MCF 10A (cell line): ENCODE measurements at regions of chr11 and their contacts with region 1.

Region 1: GRCh38 chr11:47152953-47153950 is 23.4 kb downstream of the ARFGAP2 start:
- DNase-seq: peak; percentile 80
- H3K4me3 Mint-ChIP-seq: no peak overlapping the region
- H3K27ac Mint-ChIP-seq: no peak overlapping the region
- H3K4me1 Mint-ChIP-seq: peaks cover 6% of the 10 kb centered on the region
- H3K27me3 Mint-ChIP-seq: no peaks in the 10 kb centered on the region
- CTCF ChIP-seq: peak; percentile 96

Region 2: DNA sequence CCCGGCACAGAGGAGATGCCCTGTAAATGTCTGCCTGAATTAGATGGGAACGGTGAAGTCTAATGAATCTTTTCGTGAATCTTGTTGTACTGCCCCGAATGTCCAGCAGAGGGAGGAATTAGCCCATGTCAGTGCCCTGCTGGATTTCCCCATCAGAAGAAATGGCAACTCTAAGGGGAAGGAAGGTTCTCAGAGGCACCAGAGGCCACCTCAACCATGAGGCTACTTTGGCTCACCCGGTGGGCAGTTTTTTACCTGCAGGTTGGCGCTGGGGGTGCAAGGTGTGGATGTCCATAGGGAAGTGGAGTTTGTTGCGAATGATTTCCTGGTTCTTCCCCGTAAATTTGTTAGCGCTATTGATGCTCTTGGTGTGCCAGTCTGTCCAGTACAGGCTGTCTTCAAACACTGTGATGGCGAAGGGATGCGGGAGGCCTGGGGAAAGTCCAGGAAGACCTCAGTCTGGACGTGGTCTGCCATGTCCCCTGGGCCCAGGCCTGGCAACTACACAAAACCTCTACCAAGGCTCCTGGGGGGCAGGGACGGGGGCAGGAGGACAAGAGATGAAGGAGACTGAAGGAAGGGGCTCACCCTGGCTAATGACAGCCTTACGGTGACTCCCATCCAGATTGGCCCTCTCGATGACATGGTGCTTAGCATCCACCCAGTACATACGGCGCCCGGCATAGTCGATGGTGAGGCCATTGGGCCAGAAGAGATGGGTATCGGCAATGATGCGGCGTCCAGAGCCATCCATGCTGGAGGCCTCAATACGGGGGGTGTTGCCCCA is 263.4 kb before region 1 on chr11:
- CTCF ChIA-PET with region 1: interaction called, 99 read pairs
- POLR2A ChIA-PET with region 1: interaction called, 3 read pairs
- intact Hi-C with region 1: loop called (anchors 1 kb)
- DNase-seq: peak; percentile 82
- H3K4me3 Mint-ChIP-seq: no peak overlapping the region
- H3K27ac Mint-ChIP-seq: no peak overlapping the region
- H3K4me1 Mint-ChIP-seq: no peaks in the 10 kb centered on the region
- H3K27me3 Mint-ChIP-seq: no peaks in the 10 kb centered on the region
- CTCF ChIP-seq: peak; percentile 72

Region 3: GRCh38 chr11:46906609-46907041 is 246.6 kb before region 1 on chr11:
- CTCF ChIA-PET with region 1: interaction called, 12 read pairs
- POLR2A ChIA-PET with region 1: no interaction called
- intact Hi-C with region 1: no loop called
- DNase-seq: no peak
- H3K4me3 Mint-ChIP-seq: no peak overlapping the region
- H3K27ac Mint-ChIP-seq: no peak overlapping the region
- H3K4me1 Mint-ChIP-seq: no peaks in the 10 kb centered on the region
- H3K27me3 Mint-ChIP-seq: peaks cover 7% of the 10 kb centered on the region
- CTCF ChIP-seq: no peak

Region 4: GRCh38 chr11:47130543-47130942 is 22.7 kb before region 1 on chr11:
- CTCF ChIA-PET with region 1: interaction called, 12 read pairs
- POLR2A ChIA-PET with region 1: no interaction called
- intact Hi-C with region 1: no loop called
- DNase-seq: no peak
- H3K4me3 Mint-ChIP-seq: no peak overlapping the region
- H3K27ac Mint-ChIP-seq: no peak overlapping the region
- H3K4me1 Mint-ChIP-seq: no peaks in the 10 kb centered on the region
- H3K27me3 Mint-ChIP-seq: no peaks in the 10 kb centered on the region
- CTCF ChIP-seq: no peak

Region 5: GRCh38 chr11:47317064-47317828 is 164.0 kb after region 1 on chr11:
- CTCF ChIA-PET with region 1: no interaction called
- POLR2A ChIA-PET with region 1: no interaction called
- intact Hi-C with region 1: no loop called
- DNase-seq: no peak
- H3K4me3 Mint-ChIP-seq: no peak overlapping the region
- H3K27ac Mint-ChIP-seq: no peak overlapping the region
- H3K4me1 Mint-ChIP-seq: no peaks in the 10 kb centered on the region
- H3K27me3 Mint-ChIP-seq: no peaks in the 10 kb centered on the region
- CTCF ChIP-seq: no peak

Region 6: DNA sequence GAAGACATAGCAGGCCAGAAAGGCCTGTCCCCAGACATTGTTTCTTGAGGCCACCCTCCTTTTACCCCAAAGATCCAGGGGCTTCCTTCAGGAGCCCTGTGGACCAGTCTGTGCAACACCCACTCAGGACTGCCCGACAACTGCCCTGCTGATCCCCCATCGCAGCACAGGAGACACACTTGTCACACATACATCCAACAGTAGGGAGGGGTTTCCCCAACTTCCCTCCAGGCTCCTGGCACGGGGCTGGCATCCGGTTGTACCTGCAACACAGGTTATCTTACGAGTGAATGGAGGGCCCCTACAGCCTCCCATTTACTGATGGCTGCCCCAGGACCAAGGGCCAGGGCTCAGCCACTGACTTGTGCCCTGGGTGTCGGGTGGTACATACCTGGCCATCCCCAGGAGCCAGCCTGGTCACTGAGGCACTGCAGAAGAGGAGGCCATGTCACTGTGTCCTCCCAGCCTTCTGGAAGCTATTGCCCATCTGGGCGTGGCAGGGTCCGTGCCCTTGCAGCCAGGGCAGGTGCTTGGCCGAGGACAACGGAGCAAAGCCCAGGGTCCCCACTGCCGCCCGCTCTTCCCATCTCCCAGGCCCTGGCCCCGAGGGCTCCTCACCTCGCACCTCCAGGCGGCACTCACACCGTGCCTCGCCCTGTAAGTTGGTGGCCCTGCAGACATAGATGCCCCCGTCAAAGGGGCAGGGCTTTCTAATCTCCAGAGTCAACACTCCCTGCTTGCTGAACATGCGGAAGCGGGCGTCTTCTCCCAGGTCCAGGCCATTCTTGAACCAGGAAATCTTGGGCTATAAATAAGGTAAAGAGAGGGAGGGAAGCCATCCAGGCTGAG is 178.4 kb after region 1 on chr11:
- CTCF ChIA-PET with region 1: no interaction called
- POLR2A ChIA-PET with region 1: no interaction called
- intact Hi-C with region 1: no loop called
- DNase-seq: no peak
- H3K4me3 Mint-ChIP-seq: no peak overlapping the region
- H3K27ac Mint-ChIP-seq: no peak overlapping the region
- H3K4me1 Mint-ChIP-seq: no peaks in the 10 kb centered on the region
- H3K27me3 Mint-ChIP-seq: no peaks in the 10 kb centered on the region
- CTCF ChIP-seq: no peak

Region 7: DNA sequence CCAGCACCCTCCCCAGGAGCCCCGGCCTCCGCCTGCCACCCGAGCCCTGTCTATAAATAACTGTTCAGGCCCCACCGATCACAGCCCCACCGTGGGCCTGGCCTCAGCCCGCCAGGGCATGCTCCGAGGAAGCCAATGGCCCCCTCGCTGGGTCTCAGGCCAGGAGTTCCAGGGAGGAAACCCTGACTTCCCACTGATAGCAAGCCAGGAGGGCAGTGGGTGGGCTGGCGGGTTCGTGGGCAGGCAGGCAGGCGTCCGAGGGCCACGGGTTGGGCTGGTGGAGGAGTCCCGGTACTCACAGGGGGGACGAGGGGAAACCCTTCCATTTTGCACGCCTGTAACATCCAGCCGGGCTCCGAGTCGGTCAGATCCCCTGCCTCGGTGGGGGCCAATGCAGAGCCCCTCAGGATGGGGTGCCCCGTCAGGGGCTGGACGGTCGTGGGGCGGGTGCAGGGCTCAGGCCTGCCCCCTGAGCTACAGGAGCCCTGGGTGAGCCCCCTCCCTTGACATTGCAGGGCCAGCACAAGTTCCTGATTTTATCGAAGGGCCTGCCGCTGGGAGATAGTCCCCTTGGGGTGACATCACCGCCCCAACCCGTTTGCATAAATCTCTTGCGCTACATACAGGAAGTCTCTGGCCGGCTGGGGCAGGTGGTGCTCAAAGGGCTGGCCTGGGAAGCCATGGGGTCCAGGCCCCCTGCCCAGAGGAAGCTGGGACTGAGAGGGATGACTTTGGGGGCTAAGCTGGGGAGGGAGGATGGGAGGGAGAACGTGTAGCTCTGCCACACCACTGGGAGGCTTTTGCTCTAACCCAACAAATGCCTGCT is 225.0 kb after region 1 on chr11 and contains the start of gene SPI1:
- CTCF ChIA-PET with region 1: no interaction called
- POLR2A ChIA-PET with region 1: no interaction called
- intact Hi-C with region 1: no loop called
- DNase-seq: no peak
- H3K4me3 Mint-ChIP-seq: no peak within 1 kb of the TSS
- H3K27ac Mint-ChIP-seq: no peak within 1 kb of the TSS
- H3K4me1 Mint-ChIP-seq: peaks cover 9% of the 10 kb centered on the region
- H3K27me3 Mint-ChIP-seq: no peaks in the 10 kb centered on the region
- CTCF ChIP-seq: no peak
- total RNA-seq, gene SPI1: not detected in 2 replicates

Region 8: DNA sequence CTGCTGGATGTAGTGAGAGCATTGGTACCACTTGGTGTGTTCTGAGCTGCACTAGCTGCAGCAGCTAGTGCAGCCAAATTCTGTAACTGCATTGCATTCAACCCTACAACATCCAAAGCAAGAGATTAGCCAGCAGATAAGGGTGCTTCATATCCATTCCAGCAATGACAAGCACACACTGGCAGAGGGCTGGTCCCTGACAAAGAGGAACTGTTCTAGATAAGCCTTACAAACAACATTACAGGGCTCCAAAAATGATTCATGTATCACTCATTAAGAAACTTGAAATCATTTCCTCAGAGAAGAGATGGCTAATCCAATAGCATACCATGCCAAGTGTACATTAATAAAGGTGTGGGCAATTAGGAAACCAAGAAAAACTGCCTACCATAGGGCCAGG is 324.1 kb after region 1 on chr11:
- CTCF ChIA-PET with region 1: no interaction called
- POLR2A ChIA-PET with region 1: no interaction called
- intact Hi-C with region 1: no loop called
- DNase-seq: no peak
- H3K4me3 Mint-ChIP-seq: no peak overlapping the region
- H3K27ac Mint-ChIP-seq: peak overlapping the region; percentile 80
- H3K4me1 Mint-ChIP-seq: peaks cover 8% of the 10 kb centered on the region
- H3K27me3 Mint-ChIP-seq: no peaks in the 10 kb centered on the region
- CTCF ChIP-seq: no peak